ENCODE measurements at regions of chr12 and their contacts with region 1.

Region 1: GRCh38 chr12:56593909-56594621 is 36.1 kb downstream of the BAZ2A start:
- DNase-seq: peak; percentile 72
- H3K4me3 ChIP-seq: no peak overlapping the region
- H3K27ac ChIP-seq: no peak overlapping the region
- H3K4me1 ChIP-seq: peaks cover 8% of the 10 kb centered on the region
- CTCF ChIP-seq: peak; percentile 87

Region 2: GRCh38 chr12:56510786-56511185 is 83.3 kb before region 1 on chr12:
- CTCF ChIA-PET with region 1: no interaction called
- POLR2A ChIA-PET with region 1: no interaction called
- intact Hi-C with region 1: loop called (anchors 5 kb)
- DNase-seq: no peak
- H3K4me3 ChIP-seq: no peak overlapping the region
- H3K27ac ChIP-seq: no peak overlapping the region
- H3K4me1 ChIP-seq: no peaks in the 10 kb centered on the region
- CTCF ChIP-seq: no peak